Caco-2 (cell line): ENCODE measurements at regions of chr12 and their contacts with region 1.

Region 1: DNA sequence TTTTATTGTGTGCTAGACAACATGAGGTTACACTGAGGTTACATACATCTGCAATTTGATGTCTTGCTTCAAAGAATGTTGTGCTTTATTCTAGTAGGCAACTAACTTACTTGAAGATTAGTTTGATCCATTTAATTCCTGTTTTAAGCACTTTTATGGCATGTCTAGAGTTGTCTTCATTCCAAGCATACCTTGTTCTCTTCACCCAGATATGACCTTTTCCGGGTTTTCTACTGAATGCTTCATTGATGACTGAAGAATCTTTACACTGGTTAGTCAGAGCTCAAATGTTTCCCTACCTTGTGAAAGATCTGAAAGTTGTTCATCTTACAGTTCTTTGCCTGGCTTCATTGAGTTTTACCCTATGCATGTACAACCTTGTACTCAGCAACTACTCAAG is 274.0 kb upstream of the KITLG start:
- DNase-seq: peak in 1 of 2 experiments; percentile 63
- H3K4me3 ChIP-seq: no peak overlapping the region
- H3K4me3 Mint-ChIP-seq: peak overlapping the region; percentile 20
- H3K27ac Mint-ChIP-seq: peak overlapping the region; percentile 84
- H3K4me1 ChIP-seq: peaks cover 26% of the 10 kb centered on the region
- H3K4me1 Mint-ChIP-seq: peaks cover 20% of the 10 kb centered on the region
- H3K27me3 ChIP-seq: no peaks in the 10 kb centered on the region
- H3K27me3 Mint-ChIP-seq: no peaks in the 10 kb centered on the region
- CTCF ChIP-seq: no peak

Region 2: GRCh38 chr12:88753066-88753465 is 101.2 kb before region 1 on chr12:
- CTCF ChIA-PET with region 1: no interaction called
- POLR2A ChIA-PET with region 1: no interaction called
- intact Hi-C with region 1: loop called (anchors 1 kb)
- DNase-seq: no peak
- H3K4me3 ChIP-seq: no peak overlapping the region
- H3K4me3 Mint-ChIP-seq: no peak overlapping the region
- H3K27ac Mint-ChIP-seq: peak overlapping the region; percentile 9
- H3K4me1 ChIP-seq: peaks cover 48% of the 10 kb centered on the region
- H3K4me1 Mint-ChIP-seq: peaks cover 34% of the 10 kb centered on the region
- H3K27me3 ChIP-seq: no peaks in the 10 kb centered on the region
- H3K27me3 Mint-ChIP-seq: no peaks in the 10 kb centered on the region
- CTCF ChIP-seq: no peak

Region 3: DNA sequence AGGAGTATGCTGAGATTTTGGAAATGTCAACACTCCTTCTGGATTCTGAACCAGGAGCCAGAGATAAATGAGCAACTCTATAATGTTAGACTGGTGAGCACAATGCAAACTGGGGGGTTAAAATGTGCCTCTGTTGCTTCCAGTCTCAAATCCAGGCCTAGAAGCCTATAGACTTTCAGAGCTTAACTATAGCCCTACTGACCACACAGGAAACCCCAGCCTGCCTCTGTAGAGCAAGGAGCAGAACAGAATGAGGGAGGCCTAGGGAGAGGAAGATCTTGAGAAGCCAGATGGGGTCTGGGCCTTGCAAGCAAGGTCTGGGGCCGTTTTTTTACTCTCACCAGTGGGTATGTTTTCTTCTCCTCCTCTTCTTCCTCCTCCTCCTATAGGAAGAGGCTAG is 48.6 kb before region 1 on chr12:
- CTCF ChIA-PET with region 1: no interaction called
- POLR2A ChIA-PET with region 1: no interaction called
- intact Hi-C with region 1: loop called (anchors 5 kb)
- DNase-seq: no peak
- H3K4me3 ChIP-seq: no peak overlapping the region
- H3K4me3 Mint-ChIP-seq: no peak overlapping the region
- H3K27ac Mint-ChIP-seq: no peak overlapping the region
- H3K4me1 ChIP-seq: peaks cover 9% of the 10 kb centered on the region
- H3K4me1 Mint-ChIP-seq: peaks cover 12% of the 10 kb centered on the region
- H3K27me3 ChIP-seq: no peaks in the 10 kb centered on the region
- H3K27me3 Mint-ChIP-seq: no peaks in the 10 kb centered on the region
- CTCF ChIP-seq: no peak